ENCODE measurements at regions of chr11 and their contacts with region 1.

Region 1: DNA sequence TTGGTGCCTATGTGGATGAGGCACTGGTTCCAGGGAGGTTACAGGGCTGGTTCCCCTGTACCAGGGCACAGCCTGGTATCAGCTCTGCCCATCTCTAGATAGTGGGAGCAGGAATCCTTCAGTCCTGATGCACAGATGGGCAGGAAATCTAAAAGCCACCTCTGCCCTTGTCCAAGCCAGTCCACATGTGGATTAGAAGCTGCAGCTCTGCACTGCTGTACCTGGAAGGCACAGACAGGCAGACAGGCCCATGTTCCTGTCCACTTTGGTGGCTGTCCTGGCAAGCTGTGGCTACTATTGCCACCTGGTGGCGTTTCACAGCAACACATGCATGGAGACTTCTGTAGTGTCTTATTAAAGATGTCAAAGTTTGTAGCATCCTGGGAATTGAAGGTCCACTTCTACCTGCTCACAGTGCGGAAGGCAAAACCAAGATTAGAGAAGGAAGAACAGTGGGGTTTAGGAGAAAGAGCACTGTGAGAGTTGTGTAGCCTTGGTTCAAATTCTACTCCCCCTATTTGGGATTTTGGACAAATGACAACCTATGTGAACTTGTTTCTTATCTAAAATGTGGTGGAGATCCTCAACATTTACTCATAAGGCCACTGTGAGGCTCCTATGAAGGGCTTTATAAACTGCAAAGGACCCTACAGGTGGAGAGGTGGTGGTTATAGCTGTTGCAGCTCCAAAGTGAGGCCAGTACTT is 30.1 kb downstream of the NAV2 start:
- DNase-seq: peak; percentile 82 to 89
- ATAC-seq: peak; percentile 87
- H3K4me3 ChIP-seq: no peak overlapping the region
- H3K27ac ChIP-seq: peak overlapping the region in 1 of 2 donors; percentile 60
- H3K4me1 ChIP-seq: peaks cover 3% of the 10 kb centered on the region in 2 donors
- H3K27me3 ChIP-seq: no peaks in the 10 kb centered on the region

Region 2: DNA sequence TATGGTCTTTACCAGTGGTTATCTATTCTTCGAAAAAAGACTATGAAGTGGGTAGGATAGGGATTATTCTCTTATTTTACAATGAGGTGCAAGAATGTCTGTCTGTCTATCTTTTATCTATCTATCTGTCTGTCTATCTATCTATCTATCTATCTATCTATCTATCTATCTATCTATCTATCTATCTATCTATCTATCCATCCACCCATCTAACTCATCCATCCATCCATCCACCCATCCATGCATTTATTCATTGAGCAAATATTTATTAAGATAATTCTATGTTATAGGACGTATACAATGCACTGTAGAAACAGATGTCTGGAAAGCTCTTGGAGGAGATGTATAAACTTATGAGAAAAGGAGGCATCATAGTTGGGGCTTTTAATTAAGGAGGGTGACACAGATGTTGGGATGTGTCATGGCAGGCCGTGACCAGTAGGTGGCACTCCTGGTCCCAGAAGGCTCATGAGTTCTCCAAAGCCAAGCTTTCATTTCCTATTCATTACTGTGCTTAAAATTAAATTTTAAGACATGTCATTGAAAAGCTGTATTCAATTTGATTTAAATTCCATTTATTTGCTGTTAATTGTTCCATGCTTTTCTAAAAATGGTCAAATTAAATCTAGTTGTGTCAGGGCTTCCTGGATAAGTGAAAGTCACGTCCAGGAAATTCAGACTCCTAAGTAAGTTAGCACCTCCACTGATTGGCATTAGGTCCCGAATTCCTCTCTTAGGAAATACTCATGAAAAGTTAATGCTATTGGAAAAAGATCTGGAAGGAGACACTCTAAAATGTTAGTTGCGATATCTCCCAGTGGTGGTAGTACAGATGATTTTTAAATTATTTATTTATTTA is 483.0 kb before region 1 on chr11:
- intact Hi-C with region 1: loop called in 1 of 2 experiments (anchors 10 kb)
- DNase-seq: peak; percentile 71 to 88
- ATAC-seq: peak; percentile 78
- H3K4me3 ChIP-seq: no peak overlapping the region
- H3K27ac ChIP-seq: no peak overlapping the region
- H3K4me1 ChIP-seq: no peaks in the 10 kb centered on the region
- H3K27me3 ChIP-seq: no peaks in the 10 kb centered on the region

Region 3: DNA sequence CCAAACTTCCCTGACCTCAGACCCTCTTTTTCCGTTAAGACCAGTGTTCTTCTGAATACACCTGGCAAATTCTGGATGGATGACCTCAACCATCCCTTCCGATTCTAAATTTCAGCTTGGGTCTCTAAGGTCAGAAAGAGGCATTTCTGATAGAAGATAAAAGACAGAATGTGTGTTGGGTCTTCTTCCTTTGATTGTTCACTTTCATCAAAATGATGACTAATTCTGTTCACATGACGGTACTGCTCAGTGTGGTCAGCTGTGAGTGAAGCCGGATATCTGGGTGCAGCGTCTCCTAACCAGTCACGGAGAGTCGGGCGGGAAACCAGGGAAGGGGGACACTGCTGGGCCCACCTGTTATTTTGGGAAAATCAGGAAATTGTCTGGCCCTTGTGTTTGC is 181.7 kb before region 1 on chr11:
- intact Hi-C with region 1: loop called (anchors 1 to 2 kb)
- DNase-seq: no peak
- ATAC-seq: no peak
- H3K4me3 ChIP-seq: no peak overlapping the region
- H3K27ac ChIP-seq: no peak overlapping the region
- H3K4me1 ChIP-seq: no peaks in the 10 kb centered on the region
- H3K27me3 ChIP-seq: no peaks in the 10 kb centered on the region

Region 4: DNA sequence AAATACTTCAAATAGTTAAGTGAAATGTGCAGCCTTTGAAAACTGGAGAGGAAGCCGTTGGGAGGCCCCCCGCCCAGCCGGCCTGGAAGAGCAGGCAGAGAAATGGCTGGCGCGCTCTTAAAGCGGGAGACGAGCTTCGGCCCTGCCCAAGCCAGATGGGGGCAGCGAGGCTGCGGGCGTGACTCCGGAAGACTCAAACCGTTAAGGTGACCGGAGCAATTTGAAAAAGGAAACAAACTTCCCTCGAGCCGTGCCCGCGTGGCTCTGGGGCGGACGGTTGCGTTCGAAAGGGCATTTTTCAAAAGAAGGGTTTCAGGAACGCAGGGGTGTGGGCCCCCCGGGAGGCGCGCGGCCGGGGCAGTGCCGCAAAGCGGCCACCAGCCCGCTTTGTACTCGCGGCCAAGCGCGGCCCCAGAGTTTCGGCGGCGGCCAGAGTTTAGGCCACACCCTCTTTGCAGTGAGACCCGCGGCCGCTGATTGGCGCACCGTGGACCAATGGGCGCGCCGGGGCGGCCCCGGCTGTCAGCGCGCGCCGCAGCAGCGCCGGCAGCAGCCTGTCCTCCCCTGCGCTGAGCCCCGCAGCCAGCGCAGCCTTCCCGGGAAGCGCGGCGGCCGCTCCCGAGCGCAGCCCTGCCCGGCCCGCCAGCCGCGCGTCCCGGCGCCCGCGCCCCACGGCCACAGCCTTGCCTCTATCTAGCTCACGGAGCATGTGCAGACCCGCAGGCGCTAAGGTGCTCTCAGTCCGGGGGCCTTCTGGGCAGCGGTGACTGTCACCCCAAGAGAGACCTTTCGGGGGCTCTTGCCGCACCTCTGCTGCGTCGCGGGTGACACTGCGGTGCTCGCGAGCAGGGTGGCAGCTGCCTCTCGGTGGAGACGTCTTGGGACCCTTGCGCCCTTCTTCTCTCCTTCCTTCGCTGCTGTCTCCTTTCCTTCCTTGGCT is 30.2 kb before region 1 on chr11 and contains the start of gene NAV2:
- intact Hi-C with region 1: no loop called
- DNase-seq: peak; percentile 96
- ATAC-seq: peak; percentile 95
- H3K4me3 ChIP-seq: peak within 1 kb of the TSS; percentile 73 to 82
- H3K27ac ChIP-seq: peak within 1 kb of the TSS; percentile 73 to 96
- H3K4me1 ChIP-seq: peaks cover 0 to 4% of the 10 kb centered on the region in 2 donors
- H3K27me3 ChIP-seq: no peaks in the 10 kb centered on the region
- total RNA-seq, gene NAV2: 84.6 to 250 TPM

Region 5: GRCh38 chr11:19903620-19904069 is 160.9 kb after region 1 on chr11:
- intact Hi-C with region 1: loop called (anchors 5 to 10 kb)
- DNase-seq: peak; percentile 82 to 85
- ATAC-seq: peak; percentile 85
- H3K4me3 ChIP-seq: no peak overlapping the region
- H3K27ac ChIP-seq: peak overlapping the region in 1 of 2 donors; percentile 74
- H3K4me1 ChIP-seq: peaks cover 0 to 7% of the 10 kb centered on the region in 2 donors
- H3K27me3 ChIP-seq: no peaks in the 10 kb centered on the region